Activated naive CD4-positive, alpha-beta T cell treated with anti-CD3 and anti-CD28 coated beads for 36 hours (primary cell): ENCODE measurements at regions of chr1 and their contacts with region 1.

Region 1: GRCh38 chr1:66725885-66726665 is 26.2 kb upstream of the DYNLT5 start:
- DNase-seq: peak; percentile 78
- H3K4me3 Mint-ChIP-seq: no peak overlapping the region
- H3K27ac Mint-ChIP-seq: no peak overlapping the region
- H3K4me1 Mint-ChIP-seq: peaks cover 14% of the 10 kb centered on the region
- H3K27me3 Mint-ChIP-seq: peaks cover 4% of the 10 kb centered on the region

Region 2: GRCh38 chr1:65067491-65068201 is 1658.4 kb before region 1 on chr1:
- CTCF ChIA-PET with region 1: no interaction called
- intact Hi-C with region 1: loop called (anchors 5 kb)
- DNase-seq: peak; percentile 71
- H3K4me3 Mint-ChIP-seq: peak overlapping the region; percentile 87
- H3K27ac Mint-ChIP-seq: peak overlapping the region; percentile 95
- H3K4me1 Mint-ChIP-seq: peaks cover 51% of the 10 kb centered on the region
- H3K27me3 Mint-ChIP-seq: no peaks in the 10 kb centered on the region

Region 3: DNA sequence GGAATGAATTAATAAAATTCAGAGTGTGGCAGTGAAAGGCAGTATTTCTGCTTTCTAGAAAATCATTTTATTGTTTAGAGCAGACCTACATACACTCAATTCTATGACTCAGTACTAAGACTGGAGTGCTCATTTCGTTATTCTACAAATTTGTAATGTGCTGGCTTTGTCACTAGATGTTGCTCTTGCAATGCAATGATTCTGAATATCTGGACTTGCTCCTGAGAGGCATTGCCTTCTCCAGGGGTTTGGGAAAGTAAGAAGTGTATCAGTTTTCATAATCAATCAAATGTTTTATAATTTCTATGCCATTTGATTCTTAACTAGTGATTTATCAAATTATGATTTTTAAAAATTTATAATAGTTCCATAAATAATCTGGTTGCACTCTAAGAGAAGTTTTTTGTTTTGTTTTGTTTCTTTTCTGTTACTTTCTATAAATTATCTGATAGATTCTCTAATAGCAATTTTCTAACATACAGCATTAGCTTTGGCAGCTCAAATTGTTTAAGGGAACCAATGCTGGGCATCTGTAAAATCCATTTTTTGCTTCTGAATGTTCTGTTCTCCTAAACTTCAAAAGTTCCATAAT is 472.6 kb before region 1 on chr1:
- CTCF ChIA-PET with region 1: no interaction called
- intact Hi-C with region 1: loop called (anchors 1 kb)
- DNase-seq: peak; percentile 39
- H3K4me3 Mint-ChIP-seq: no peak overlapping the region
- H3K27ac Mint-ChIP-seq: no peak overlapping the region
- H3K4me1 Mint-ChIP-seq: peaks cover 48% of the 10 kb centered on the region
- H3K27me3 Mint-ChIP-seq: no peaks in the 10 kb centered on the region

Region 4: DNA sequence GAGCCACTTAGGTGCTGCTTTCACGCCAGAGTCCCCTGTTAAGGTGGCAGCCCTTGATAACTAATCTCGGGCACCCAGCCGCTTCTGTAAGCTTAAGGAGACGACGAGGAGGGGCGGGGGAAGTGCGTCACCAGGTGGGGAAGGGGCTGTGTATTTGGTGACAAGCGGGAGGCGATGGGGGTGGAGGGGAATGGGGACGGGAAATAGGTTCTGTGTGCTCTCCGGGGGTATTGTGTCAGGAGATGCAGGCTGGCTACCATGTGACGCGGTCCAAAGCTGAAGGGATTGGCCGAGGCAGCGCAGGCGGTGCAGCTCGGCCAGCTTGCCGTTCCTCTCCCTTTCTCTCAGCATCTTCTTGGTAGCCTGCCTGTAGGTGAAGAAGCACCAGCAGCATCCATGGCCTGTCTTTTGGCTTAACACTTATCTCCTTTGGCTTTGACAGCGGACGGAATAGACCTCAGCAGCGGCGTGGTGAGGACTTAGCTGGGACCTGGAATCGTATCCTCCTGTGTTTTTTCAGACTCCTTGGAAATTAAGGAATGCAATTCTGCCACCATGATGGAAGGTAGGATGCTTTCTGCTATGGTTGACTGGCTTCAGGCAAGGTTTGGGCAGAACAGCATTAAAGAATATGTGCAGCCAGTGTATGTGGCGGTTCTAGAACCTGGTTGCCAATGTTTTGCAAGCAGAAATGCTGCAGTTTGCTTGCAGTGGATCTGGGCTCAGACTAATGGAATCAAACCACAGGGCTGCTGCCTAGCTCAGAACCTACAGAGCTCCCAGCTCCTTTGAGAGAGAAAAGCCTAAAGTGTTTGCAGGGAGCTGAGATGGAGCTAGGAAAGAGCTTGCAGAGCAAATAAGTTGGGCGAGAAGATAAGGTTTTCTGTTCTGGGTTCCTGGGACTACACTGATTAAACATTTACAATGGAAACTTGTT is 192.0 kb before region 1 on chr1 and contains the start of gene SGIP1:
- CTCF ChIA-PET with region 1: no interaction called
- intact Hi-C with region 1: loop called (anchors 1 kb)
- DNase-seq: peak; percentile 40
- H3K4me3 Mint-ChIP-seq: peak within 1 kb of the TSS; percentile 78
- H3K27ac Mint-ChIP-seq: no peak within 1 kb of the TSS
- H3K4me1 Mint-ChIP-seq: peaks cover 9% of the 10 kb centered on the region
- H3K27me3 Mint-ChIP-seq: peaks cover 30% of the 10 kb centered on the region
- total RNA-seq, gene SGIP1: 0.07 TPM in 1 of 2 experiments, not detected in the other

Region 5: DNA sequence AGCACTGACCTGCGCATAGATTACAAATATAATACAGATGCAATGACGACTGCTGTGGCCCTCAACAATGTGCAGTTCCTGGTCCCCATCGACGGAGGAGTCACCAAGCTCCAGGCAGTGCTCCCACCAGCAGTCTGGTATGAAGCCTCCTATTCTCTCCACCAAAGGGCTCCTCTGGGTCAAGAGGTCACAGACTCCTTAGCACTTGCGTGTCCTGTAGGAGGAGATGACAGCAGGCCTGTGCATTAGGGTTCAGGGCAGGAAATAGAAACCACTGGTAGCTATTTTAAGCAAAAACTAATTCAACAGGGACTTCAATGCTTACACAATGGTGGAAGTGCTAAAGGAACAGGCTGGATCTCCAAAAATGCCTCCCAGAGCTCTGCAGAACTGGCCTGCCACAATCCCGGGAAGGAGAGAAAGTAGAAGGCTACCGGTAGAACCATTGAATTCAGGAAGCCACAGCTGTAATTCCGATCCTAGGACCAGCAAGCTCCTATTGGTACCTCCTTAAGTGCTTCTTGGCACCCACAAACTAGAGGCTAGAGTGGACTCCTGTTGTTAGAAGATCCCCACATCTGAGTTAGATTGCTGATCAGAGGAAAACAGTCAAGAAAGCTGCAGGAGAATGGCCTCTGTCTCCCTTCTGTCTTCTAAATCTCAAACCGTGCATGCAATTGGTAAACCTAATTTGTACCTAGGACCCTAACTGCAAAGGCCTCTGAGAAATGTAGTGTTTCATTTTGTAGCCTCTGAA is 13.5 kb after region 1 on chr1:
- CTCF ChIA-PET with region 1: interaction called, 22 read pairs
- intact Hi-C with region 1: no loop called
- DNase-seq: no peak
- H3K4me3 Mint-ChIP-seq: no peak overlapping the region
- H3K27ac Mint-ChIP-seq: no peak overlapping the region
- H3K4me1 Mint-ChIP-seq: peaks cover 7% of the 10 kb centered on the region
- H3K27me3 Mint-ChIP-seq: no peaks in the 10 kb centered on the region